GM12878 (cell line): ENCODE measurements at regions of chr5 and their contacts with region 1.

Region 1: GRCh38 chr5:88826646-88827585 is 56.1 kb downstream of the MEF2C start:
- DNase-seq: peak; percentile 98
- ATAC-seq: peak; percentile 63
- H3K4me3 ChIP-seq: peak overlapping the region; percentile 64; the same call in 1 of the 2 replicates
- H3K27ac ChIP-seq: peak overlapping the region; percentile 80
- H3K4me1 ChIP-seq: peaks cover 23% of the 10 kb centered on the region
- H3K27me3 ChIP-seq: no peaks in the 10 kb centered on the region
- CTCF ChIP-seq: no peak
- EP300 ChIP-seq: peak; percentile 95 to 96
- POLR2A ChIP-seq: peak; percentile 52; the same call in 1 of the 2 replicates
- RAD21 ChIP-seq: no peak

Region 2: GRCh38 chr5:88785391-88786219 is 41.3 kb before region 1 on chr5:
- CTCF ChIA-PET with region 1: interaction called, 3 read pairs
- POLR2A ChIA-PET with region 1: interaction called, 3 read pairs
- RAD21 ChIA-PET with region 1: interaction called, 15 read pairs
- SMC1A ChIA-PET with region 1: interaction called, 49 read pairs
- in situ Hi-C with region 1: no loop called
- intact Hi-C with region 1: no loop called
- DNase-seq: peak; percentile 43
- ATAC-seq: peak; percentile 79
- H3K4me3 ChIP-seq: 0 out of 2 replicates have a peak overlapping the region, but pooled peaks have one; percentile 11
- H3K27ac ChIP-seq: peak overlapping the region; percentile 65
- H3K4me1 ChIP-seq: peaks cover 7% of the 10 kb centered on the region; the same call in 1 of the 2 replicates
- H3K27me3 ChIP-seq: no peaks in the 10 kb centered on the region
- CTCF ChIP-seq: no peak
- EP300 ChIP-seq: peak in 1 of 2 experiments; percentile 61; a peak in 3 of 4 replicates
- POLR2A ChIP-seq: no peak
- RAD21 ChIP-seq: no peak

Region 3: DNA sequence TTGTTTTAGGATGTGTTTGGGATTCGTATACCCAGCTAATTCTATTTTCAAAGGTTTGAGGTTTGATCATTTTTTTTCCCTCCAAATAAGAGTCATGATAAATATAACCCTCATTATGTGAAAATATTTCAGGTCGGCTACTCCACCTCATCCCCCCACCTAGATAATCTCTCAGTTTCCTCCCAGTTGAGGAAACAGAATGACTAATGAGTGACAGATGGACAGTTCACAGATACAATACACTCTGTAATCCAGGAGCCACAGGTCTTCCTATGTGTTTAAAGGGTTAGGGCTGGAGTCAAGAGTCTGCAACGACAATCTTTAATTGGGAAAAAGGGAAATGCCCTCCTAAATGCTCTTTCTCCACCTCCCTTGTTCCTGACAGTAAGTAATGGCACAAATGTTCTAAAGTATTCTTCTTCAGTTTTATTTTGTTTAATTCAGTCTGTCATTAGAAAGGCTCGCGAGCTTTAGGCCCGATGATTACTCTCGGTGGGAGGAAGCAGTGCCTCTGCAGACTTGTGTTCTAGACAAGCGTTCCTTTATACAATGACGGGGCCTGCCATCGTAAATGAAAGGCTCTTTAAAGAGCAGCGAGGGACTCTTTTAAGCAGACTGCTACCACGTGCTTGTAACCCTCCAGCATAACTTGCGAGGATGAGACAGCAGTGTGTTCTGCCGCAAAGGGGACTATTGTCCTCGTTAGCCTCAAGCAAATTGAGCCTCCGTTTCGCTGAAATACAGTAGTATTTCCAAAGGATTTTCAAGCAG is 12.9 kb before region 1 on chr5:
- CTCF ChIA-PET with region 1: interaction called, 37 read pairs
- POLR2A ChIA-PET with region 1: interaction called, 39 read pairs
- RAD21 ChIA-PET with region 1: interaction called, 86 read pairs
- SMC1A ChIA-PET with region 1: interaction called, 90 read pairs
- in situ Hi-C with region 1: no loop called
- intact Hi-C with region 1: no loop called
- DNase-seq: no peak
- ATAC-seq: peak; percentile 11; the same call in 2 of the 3 replicates
- H3K4me3 ChIP-seq: 0 out of 2 replicates have a peak overlapping the region, but pooled peaks have one; percentile 10
- H3K27ac ChIP-seq: no peak overlapping the region; the same call in 1 of the 2 replicates
- H3K4me1 ChIP-seq: peaks cover 29% of the 10 kb centered on the region
- H3K27me3 ChIP-seq: no peaks in the 10 kb centered on the region
- CTCF ChIP-seq: no peak
- EP300 ChIP-seq: no peak
- POLR2A ChIP-seq: no peak
- RAD21 ChIP-seq: no peak

Region 4: DNA sequence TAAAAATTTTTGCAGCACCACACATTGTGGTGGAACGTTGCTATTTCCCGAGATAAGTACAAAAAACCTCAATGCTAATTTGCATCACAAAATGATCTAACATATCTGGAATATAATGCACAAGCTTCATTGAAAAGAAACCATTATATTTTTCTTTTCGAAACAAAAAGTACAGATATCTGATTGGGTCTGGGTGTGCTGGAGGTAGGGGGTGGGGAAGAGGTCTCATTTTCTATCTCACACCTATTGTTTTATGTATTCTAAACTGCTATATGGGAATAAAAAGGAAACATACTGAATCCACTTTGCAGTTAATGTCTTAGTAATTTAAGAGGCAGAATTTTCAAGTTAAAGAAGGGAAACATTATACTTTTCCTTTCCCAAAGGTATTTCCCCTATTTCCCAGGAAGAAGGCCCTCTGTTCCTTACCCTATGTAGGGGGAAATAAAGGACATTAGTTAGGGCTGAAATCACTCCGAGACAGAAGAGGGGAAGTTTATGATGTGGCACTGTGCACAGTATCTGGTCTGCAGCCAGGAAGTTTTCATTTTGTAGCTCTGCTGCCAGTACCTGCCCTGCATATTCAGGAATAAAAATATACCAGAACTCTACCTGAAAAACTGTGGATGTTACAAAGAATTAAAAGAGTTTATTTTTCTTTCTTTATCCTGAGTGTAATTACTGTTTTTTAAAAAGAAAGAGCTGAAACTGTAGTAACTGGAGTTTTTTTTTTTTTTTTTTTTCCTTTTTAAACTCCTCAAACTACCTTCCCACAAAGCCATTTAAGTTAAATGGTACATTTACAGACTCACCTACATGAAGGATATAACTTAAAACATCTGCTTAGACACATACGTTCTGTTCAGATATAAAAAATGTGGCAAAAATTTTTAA is 48.7 kb after region 1 on chr5:
- CTCF ChIA-PET with region 1: interaction called, 4 read pairs
- POLR2A ChIA-PET with region 1: interaction called, 4 read pairs
- RAD21 ChIA-PET with region 1: interaction called, 82 read pairs
- SMC1A ChIA-PET with region 1: interaction called, 182 read pairs
- in situ Hi-C with region 1: no loop called
- intact Hi-C with region 1: no loop called
- DNase-seq: no peak
- ATAC-seq: peak; percentile 65
- H3K4me3 ChIP-seq: peak overlapping the region; percentile 65
- H3K27ac ChIP-seq: peak overlapping the region; percentile 67
- H3K4me1 ChIP-seq: no peaks in the 10 kb centered on the region
- H3K27me3 ChIP-seq: no peaks in the 10 kb centered on the region
- CTCF ChIP-seq: no peak
- EP300 ChIP-seq: no peak
- POLR2A ChIP-seq: peak; percentile 22; the same call in 1 of the 2 replicates
- RAD21 ChIP-seq: no peak

Region 5: DNA sequence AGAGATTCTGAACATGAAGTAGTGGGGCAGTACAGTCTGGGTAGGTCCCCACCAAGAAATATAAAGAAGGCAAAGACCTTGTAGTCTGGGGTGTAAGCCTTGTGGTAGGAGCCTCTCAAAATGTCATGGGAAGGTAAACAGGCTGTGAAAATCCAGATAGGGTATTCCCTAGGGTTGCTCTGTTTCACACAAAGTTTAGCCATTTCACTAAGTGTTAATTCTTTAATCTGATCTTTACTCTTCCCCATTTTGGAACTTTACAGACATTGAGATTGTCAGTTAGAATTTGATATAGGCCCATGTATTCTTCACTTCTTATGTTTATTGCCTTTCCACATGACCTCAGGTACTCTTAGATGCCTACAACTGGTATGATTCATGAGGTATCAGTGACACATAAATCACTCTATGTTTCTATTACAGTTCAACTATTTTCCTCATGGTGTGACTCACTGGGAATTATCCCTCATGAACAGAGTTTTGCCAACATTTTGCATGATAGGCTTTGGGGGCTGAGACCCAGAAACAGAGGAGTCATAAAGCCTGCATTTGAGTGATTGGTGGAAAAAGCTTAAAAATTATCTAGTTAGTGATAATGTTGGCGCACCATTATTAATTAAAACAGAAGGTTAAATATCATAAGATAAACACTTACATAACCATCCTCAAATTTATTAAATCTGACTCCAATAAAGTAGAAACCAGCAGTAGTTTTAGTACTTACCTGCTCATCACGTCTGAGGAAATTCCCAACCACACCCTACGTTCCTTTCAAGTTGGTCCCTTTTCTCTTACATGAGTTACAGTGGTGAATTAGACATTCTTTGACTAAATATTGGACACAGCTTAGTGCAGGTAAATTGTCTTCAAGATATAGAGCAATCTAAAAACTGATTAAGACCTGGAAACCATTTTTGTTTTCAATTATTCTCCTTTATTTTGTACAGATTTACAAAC is 455.9 kb after region 1 on chr5:
- CTCF ChIA-PET with region 1: no interaction called
- POLR2A ChIA-PET with region 1: no interaction called
- RAD21 ChIA-PET with region 1: interaction called, 3 read pairs
- SMC1A ChIA-PET with region 1: no interaction called
- in situ Hi-C with region 1: no loop called
- intact Hi-C with region 1: loop called (anchors 5 kb)
- DNase-seq: peak; percentile 31
- ATAC-seq: peak; percentile 54
- H3K4me3 ChIP-seq: no peak overlapping the region
- H3K27ac ChIP-seq: peak overlapping the region; percentile 59
- H3K4me1 ChIP-seq: peaks cover 40% of the 10 kb centered on the region
- H3K27me3 ChIP-seq: no peaks in the 10 kb centered on the region
- CTCF ChIP-seq: no peak
- EP300 ChIP-seq: peak in 1 of 2 experiments; percentile 30; a peak in 1 of 4 replicates
- POLR2A ChIP-seq: no peak
- RAD21 ChIP-seq: peak; percentile 1; the same call in 1 of the 2 replicates